ENCODE measurements at regions of chr2 and their contacts with region 1.

Region 1: DNA sequence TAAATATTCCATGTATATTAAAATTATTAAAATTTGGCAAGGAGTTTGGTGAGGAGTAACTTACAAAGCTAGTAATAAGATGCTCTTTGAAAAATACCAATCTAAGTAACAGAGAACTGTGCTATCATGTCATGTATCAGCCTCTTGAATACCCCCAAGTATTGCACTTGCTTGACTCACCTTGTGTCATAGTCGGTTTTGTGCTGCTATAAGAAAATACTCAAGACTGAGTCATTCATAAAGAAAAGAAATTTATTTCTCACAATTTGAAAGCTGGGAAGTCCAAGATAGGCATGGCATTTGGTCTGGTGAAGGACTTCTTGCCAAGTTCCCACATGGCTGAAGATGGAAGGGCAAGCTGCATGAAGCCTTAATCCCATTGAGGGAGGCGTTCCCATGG is 179.2 kb downstream of the MEMO1 start:
- DNase-seq: no peak
- H3K4me3 ChIP-seq: no peak overlapping the region
- H3K27ac ChIP-seq: no peak overlapping the region
- H3K4me1 ChIP-seq: no peaks in the 10 kb centered on the region
- H3K27me3 ChIP-seq: no peaks in the 10 kb centered on the region
- CTCF ChIP-seq: no peak
- POLR2A ChIP-seq: no peak

Region 2: DNA sequence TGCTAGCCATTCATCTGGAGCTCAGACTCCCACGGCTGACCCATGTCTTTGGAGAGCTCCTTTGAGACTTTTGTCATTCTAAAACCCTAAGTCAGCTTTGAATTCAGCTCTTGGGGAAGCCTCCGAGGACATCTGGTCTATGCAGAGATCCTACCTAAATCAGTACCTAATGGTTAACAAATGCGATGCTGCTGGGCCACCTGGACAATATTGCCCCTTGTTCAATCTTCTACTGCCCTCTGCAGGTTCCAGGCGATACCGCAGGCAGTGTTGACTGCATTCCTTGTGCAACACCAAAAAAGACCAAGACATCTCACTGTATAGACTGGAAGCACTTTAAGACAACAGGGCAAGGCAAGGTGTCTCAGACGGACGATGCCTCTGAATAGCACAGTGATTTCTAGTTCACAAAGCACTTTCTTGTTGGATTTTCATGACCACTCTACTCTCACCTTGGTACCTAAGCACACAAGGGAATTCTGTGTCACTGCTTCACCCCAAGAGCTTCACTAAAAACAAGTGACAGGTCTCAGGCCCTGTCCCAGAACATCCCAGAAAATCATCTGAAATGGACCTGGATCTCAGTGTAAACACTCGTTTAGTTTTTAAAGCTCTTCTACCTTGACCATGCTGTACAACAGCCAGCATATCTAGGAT is 497.9 kb before region 1 on chr2:
- intact Hi-C with region 1: loop called (anchors 10 kb)
- DNase-seq: peak; percentile 89
- H3K4me3 ChIP-seq: no peak overlapping the region
- H3K27ac ChIP-seq: peak overlapping the region in 1 of 2 donors; percentile 7
- H3K4me1 ChIP-seq: no peaks in the 10 kb centered on the region
- H3K27me3 ChIP-seq: peaks cover 2% of the 10 kb centered on the region
- CTCF ChIP-seq: peak; percentile 64 to 95 (median 89)
- POLR2A ChIP-seq: no peak

Region 3: DNA sequence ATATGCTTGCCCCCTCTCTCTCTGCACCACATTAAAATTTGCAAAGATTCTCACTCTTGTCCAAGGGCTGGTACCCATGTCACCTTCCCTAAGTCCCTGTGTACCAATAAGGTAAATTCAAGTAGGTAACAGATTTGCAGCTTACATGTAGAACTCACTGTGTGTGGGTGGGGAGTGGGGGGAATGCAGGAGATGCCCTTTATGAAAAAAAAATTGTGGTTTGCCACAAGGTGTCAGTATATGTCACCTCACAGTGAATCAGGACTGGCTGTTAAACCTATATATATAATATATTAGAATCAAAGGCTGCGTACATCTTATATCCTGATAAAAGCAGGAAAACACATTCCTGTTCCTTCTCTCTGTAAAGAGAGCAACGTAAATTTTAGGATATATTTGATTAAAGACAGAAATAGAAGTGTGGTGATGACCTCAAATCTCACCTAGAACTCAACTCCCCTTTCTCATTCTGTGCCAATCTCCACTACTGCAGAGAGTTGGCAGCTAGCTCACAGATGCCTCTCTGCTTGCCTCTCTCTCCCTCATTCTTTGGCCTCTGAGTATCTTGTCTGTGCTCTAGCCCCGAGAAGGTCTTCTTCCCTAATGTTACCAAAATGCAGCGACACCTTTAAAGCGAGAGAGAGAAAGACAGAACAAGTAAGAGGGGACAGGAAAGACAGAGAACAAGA is 417.6 kb before region 1 on chr2:
- intact Hi-C with region 1: loop called (anchors 10 kb)
- DNase-seq: no peak
- H3K4me3 ChIP-seq: no peak overlapping the region
- H3K27ac ChIP-seq: no peak overlapping the region
- H3K4me1 ChIP-seq: no peaks in the 10 kb centered on the region
- H3K27me3 ChIP-seq: no peaks in the 10 kb centered on the region
- CTCF ChIP-seq: peak in 1 of 4 experiments; percentile 11
- POLR2A ChIP-seq: no peak

Region 4: GRCh38 chr2:31580321-31581117 is 251.1 kb before region 1 on chr2 and contains the start of gene SRD5A2:
- intact Hi-C with region 1: loop called (anchors 10 kb)
- DNase-seq: no peak
- H3K4me3 ChIP-seq: peak within 1 kb of the TSS; percentile 39 to 44
- H3K27ac ChIP-seq: peak within 1 kb of the TSS; percentile 75 to 79
- H3K4me1 ChIP-seq: no peaks in the 10 kb centered on the region
- H3K27me3 ChIP-seq: peaks cover 7% of the 10 kb centered on the region
- CTCF ChIP-seq: no peak
- POLR2A ChIP-seq: no peak
- total RNA-seq, gene SRD5A2: 5.0 to 8.5 TPM

Region 5: DNA sequence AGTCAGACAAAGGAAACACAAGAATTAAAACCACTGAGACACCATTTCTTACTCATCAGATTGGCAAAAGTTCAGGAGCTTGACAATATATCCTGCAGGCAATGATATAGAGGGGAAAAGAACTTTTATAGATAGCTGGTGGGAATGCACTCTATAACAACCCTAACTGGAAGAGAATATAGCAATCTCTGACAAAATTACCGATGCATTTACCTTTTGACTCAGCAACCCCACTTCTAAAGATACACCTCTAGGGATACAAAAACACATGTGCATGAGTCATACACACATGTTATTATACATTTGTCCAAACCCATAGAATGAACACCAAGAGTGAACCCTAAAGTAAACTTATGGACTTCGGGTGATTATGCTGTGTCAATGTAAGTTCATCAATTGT is 171.4 kb before region 1 on chr2:
- intact Hi-C with region 1: loop called (anchors 10 kb)
- DNase-seq: no peak
- H3K4me3 ChIP-seq: no peak overlapping the region
- H3K27ac ChIP-seq: no peak overlapping the region
- H3K4me1 ChIP-seq: no peaks in the 10 kb centered on the region
- H3K27me3 ChIP-seq: no peaks in the 10 kb centered on the region
- CTCF ChIP-seq: no peak
- POLR2A ChIP-seq: no peak

Region 6: DNA sequence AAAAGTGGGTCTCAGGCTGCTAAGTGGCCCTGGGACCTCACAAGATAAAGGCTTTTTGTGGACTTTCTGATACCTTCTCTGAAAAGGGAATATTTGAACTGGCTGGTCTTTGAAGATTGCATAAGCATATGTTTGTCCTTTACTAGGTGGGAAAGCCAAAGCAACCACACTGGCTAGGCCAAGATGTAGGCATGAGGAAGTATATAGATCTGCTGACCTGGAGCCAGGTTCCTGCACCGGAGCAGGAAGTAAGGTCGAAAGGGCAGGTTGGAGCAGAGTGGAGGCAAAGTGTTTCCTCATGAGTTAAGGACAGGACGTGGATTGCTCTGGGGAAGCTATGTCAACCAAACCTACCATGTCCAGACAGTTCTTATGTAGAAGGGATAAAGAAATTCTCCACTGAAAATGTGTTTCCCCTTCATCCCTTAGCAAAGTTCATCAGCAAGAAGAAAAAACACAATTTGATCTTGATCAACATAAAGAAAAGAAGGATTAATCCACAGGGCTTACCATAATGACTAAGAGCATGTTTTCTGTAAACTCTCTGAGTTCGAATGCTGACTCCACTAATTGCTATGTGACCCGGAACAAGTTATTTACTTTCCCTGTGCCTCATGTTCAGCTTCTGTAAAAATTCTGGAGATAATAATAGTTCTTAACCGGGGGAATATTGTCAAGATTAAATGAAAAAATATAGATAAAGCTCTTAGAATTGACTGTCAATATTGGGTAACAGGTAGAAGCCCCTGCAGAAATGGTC is 94.7 kb before region 1 on chr2:
- intact Hi-C with region 1: no loop called
- DNase-seq: peak; percentile 29
- H3K4me3 ChIP-seq: no peak overlapping the region
- H3K27ac ChIP-seq: no peak overlapping the region
- H3K4me1 ChIP-seq: no peaks in the 10 kb centered on the region
- H3K27me3 ChIP-seq: no peaks in the 10 kb centered on the region
- CTCF ChIP-seq: no peak
- POLR2A ChIP-seq: no peak

Measured in prostate gland (tissue), 2 donors.